ENCODE measurements at regions of chr1 and their contacts with region 1.

Region 1: DNA sequence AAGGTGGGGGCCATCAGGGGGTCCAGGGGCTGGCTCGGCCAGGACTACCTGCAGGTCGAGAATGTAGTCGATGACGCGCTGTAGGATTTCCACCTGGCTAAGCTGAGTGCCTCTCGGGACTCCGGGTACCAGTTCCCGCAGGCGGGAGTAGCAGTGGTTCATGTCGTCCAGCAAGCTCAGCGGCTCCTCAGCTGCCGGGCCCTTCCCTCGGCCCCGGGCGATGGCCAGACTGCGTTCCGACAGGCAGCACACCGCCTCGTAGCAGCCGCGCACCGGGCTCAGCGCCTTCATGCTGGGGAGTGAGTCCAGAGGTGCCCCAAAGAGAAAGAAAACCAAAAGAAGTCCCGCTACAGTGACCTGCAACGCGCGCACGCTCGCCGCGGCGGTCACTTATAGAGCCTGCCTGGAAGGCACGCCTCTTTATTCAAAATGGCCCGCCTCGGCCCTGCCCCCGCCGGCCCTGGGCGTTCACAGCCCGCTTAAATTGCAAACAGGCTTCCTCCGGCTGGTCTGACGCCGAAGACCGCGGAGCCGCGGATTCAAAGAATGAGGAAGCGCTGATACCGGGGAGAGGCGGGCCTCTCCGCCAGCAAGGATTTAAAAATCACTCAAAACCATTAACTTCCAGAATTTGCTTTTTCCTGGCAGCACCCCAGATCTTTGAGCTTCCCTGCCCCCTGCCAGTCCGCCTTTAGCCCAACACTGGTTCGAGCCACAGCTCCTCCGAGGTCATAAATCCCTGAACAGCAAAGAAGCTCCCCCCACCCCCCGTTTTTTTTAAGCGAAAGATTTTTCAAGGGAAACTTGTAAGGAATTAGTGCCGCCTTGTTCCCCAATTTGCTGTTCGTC is at the start of gene ID3:
- DNase-seq: peak; percentile 91
- H3K4me3 ChIP-seq: peak within 1 kb of the TSS; percentile 87
- CTCF ChIP-seq: no peak

Region 2: GRCh38 chr1:23533246-23534023 is 25.9 kb before region 1 on chr1:
- CTCF ChIA-PET with region 1: no interaction called
- POLR2A ChIA-PET with region 1: no interaction called
- DNase-seq: no peak
- H3K4me3 ChIP-seq: no peak overlapping the region
- CTCF ChIP-seq: no peak

Region 3: DNA sequence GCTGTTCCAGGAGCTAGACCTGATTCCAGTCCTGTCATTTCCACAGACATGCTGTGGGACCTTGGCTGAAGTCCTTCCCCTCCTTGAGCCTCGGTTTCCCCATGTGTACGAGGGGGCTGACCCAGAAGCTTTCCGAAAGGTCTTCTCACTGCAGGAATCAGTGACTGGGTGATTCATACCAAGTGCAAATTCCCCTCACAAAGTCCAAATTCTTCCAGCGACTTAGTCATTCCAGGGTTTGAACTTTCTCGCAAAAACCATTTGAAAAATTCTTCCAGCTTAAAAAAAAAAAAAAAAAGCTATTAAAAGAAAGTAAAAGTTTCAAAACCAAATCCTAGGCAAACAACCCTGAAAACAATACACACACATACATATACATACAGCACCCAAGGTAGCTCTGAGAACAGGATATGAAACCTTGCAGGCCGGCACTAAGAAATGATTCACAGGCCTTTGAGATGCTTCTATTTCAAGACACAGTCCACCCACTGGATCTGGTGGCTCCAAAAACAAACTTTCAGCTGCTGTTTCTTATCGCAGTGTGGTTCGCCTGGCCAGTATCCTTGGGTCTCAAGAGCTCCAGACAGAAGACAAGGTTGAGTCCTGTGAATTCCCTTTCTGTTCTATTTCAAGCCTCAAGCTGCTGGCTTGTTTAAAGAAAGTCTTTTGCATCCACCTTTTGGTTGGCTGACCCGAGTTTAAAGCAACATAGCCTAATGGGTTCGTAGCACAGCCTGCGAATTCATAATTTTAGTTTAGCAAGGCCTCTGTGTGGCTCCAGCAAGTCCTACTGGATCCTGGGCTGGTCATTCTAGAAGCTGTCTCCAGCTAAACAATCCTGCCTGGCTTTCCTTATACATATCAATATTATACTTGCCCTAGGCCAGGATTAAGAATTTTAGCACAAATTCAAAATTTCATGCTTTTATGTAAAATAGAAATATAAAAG is 18.0 kb after region 1 on chr1:
- CTCF ChIA-PET with region 1: interaction called, 15 read pairs
- POLR2A ChIA-PET with region 1: interaction called, 67 read pairs
- DNase-seq: peak; percentile 74
- H3K4me3 ChIP-seq: peak overlapping the region; percentile 43
- CTCF ChIP-seq: no peak

Region 4: DNA sequence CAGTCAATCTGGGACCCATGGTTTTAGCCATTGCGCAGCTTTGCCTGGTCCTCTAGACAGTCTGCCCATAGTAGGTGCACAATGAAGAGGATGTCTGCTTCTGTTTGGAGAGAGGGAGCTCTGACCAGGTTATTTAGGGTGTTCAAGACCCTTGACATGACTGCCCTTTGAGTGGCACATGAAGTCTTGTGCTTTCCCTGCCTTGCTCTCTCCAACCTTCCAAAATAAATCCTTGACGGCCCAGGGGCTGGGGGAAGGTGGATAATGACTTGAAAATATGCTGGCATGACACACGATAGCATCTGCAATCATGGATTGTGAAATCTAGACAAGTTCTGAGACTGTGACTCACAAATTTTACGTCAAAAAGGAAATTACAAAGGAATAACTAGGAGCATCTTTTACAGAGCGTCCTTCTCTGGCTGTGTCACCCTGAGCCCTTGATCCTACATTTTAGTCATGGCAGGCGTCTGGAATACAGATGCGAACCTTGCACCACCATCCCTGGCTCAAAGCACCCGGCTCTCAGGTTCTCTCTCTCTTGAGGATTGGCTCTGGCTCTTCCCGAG is 26.2 kb after region 1 on chr1:
- CTCF ChIA-PET with region 1: interaction called, 5 read pairs
- POLR2A ChIA-PET with region 1: interaction called, 18 read pairs
- DNase-seq: peak; percentile 97
- H3K4me3 ChIP-seq: peak overlapping the region; percentile 18
- CTCF ChIP-seq: no peak

Region 5: DNA sequence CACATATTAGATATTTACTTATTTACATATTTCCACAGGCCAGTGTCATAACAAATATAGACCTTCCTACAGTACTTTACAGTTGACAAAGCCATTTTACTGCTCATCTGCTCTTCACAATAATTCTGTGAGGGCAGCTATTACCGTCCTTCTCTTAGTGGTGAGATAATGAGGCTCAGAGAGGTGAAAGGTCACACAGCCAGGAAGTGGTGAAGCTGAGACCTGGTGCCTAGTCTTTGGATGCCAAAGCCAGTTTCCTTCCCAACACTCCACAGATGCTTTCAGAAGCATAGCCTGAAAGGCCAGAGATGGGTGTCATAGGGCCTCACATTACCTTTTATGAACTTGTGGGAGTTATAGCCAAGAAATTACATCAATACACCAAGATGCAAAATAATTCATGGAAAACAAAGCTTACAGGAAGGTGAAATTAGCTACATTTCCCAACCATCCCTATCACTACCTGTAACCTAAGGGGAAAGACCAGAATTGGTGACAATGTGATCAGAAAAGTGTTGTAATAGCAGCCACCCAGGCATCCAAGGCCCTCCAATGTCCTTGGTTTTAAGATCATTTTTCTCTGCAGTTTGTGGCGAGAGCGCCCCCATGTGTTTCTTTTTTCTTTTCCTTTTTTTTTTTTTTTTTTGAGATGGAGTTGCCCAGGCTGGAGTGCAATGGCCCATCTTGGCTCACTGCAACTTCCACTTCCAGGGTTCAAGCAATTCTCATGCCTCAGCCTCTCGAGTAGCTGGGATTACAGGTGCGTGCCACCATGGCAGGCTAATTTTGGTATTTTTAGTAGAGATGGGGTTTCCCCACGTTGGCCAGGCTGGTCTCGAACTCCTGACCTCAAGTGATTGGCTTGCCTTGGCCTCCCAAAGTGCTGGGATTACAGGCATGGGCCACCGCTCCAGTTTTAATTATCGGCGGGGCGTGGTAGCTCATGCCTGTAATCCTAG is 105.8 kb after region 1 on chr1:
- CTCF ChIA-PET with region 1: interaction called, 18 read pairs
- POLR2A ChIA-PET with region 1: no interaction called
- DNase-seq: no peak
- H3K4me3 ChIP-seq: no peak overlapping the region
- CTCF ChIP-seq: peak; percentile 1

Region 6: DNA sequence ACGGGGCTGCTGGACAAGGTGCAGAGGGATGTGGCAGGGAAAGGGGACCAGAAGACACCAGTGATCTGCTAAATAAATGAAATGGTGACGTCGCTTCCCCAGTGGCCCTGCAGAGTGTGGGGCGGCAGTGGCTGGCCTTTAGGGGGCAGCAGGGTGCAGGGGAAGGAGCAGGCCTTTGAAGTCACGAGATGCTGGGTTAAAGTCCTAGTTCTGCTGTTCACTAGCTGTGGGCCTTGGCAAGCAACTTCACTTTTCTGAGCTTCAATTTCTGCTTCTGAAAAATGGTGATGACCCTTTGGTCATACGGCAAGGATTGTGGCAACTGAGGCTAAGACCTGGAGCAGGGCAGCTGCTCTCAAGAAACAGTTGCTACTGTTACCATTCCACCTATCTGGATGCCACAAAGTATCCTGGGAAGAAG is 250.4 kb after region 1 on chr1:
- CTCF ChIA-PET with region 1: no interaction called
- POLR2A ChIA-PET with region 1: no interaction called
- DNase-seq: no peak
- H3K4me3 ChIP-seq: no peak overlapping the region
- CTCF ChIP-seq: peak; percentile 84

Measured in AG04449 (cell line).